Activated CD4-positive, alpha-beta memory T cell treated with anti-CD3 and anti-CD28 coated beads for 36 hours (primary cell): ENCODE measurements at regions of chr4 and their contacts with region 1.

Region 1: DNA sequence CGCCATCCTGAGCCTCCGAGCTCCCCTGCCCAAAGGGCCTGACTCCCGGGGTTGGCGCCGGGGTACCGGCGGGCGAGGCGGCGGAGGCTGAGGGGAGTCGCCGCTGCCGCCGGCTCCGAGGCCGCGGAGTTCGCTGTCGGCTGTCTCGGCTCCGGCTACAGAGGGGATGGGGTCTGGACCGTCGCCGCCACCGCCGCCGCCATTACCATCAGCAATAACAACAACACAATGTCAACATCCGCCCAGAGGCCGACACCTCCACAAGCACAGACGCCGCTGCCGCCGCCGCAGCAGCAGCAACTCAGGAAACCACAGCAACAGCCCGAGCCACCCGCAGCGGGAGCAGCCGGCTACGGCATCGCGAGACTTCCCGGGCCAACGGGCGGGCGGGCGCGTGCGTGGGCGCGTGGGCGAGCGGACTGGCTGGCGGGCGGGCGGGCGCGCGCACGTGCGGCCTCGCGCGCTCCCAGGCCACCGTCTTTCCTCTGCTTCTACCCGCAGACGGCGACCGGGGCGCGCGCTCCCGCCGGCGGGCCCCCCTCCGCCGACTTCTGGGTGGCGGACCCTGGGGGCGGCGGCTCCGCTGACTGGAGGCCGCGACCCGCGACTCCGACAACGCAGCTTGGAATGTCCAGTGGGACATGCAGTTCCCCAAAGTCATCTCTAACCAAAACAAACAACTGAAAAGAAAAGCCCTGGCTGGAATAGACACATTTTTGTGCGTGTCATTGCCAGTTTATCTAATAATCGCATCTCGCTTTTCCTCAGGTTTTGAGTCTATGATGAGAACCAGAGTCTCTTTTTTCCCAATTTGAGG is at the start of gene CHIC2:
- DNase-seq: peak; percentile 97
- H3K4me3 Mint-ChIP-seq: peak within 1 kb of the TSS; percentile 92
- H3K27ac Mint-ChIP-seq: peak within 1 kb of the TSS; percentile 95
- H3K4me1 Mint-ChIP-seq: peaks cover 38% of the 10 kb centered on the region
- H3K27me3 Mint-ChIP-seq: no peaks in the 10 kb centered on the region
- total RNA-seq, gene CHIC2: 11.2 to 11.8 TPM

Region 2: GRCh38 chr4:52643785-52644244 is 1420.7 kb before region 1 on chr4:
- CTCF ChIA-PET with region 1: no interaction called
- POLR2A ChIA-PET with region 1: no interaction called
- intact Hi-C with region 1: loop called (anchors 5 kb)
- DNase-seq: no peak
- H3K4me3 Mint-ChIP-seq: no peak overlapping the region
- H3K27ac Mint-ChIP-seq: no peak overlapping the region
- H3K4me1 Mint-ChIP-seq: peaks cover 57% of the 10 kb centered on the region
- H3K27me3 Mint-ChIP-seq: no peaks in the 10 kb centered on the region

Region 3: DNA sequence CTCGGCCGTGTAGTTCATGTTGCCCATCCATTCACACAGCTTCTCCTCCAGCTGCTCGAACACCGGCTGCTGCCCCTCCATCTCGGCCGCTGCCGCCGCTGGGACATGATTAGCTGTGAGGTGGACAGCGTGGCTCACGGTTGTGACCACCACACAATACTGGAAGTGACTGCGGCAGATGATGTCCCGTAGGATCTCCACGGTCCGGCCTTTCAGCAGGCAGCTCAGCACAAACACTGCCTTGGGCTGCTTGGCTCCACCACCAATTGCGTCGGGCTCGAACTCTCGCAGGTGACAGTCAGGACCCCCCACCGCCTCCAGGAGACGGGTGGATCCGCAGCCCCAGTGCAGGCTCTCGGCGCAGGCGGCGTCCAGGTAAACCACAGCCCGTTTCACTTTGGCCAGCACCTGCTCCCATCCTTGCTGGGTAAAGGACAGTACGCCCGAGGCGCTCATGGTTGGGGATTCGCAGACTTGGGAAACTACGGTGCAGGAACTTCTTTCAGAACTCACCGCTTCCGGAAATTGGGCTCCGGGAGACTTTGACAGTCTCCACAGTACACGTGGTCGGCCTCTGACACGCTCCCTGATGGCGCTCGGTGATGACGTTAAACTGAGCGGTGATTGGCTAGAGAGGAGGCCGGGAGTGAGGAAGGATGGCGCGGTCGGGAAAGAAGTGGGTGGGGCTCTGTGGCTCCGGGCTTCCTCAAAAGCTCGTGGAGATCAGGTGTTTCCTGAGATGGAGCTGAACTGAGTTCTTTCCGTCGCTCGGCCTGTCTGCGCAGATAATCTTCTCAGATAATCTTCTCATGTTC is 698.8 kb before region 1 on chr4 and contains the start of gene SCFD2:
- CTCF ChIA-PET with region 1: no interaction called
- POLR2A ChIA-PET with region 1: no interaction called
- intact Hi-C with region 1: loop called (anchors 5 kb)
- DNase-seq: peak; percentile 99
- H3K4me3 Mint-ChIP-seq: peak within 1 kb of the TSS; percentile 96
- H3K27ac Mint-ChIP-seq: peak within 1 kb of the TSS; percentile 94
- H3K4me1 Mint-ChIP-seq: peaks cover 39% of the 10 kb centered on the region
- H3K27me3 Mint-ChIP-seq: peaks cover 5% of the 10 kb centered on the region
- total RNA-seq, gene SCFD2: 18.8 to 19.9 TPM

Region 4: GRCh38 chr4:53432528-53433424 is 631.7 kb before region 1 on chr4:
- CTCF ChIA-PET with region 1: no interaction called
- POLR2A ChIA-PET with region 1: no interaction called
- intact Hi-C with region 1: loop called (anchors 10 kb)
- DNase-seq: no peak
- H3K4me3 Mint-ChIP-seq: no peak overlapping the region
- H3K27ac Mint-ChIP-seq: no peak overlapping the region
- H3K4me1 Mint-ChIP-seq: peaks cover 23% of the 10 kb centered on the region
- H3K27me3 Mint-ChIP-seq: no peaks in the 10 kb centered on the region

Region 5: GRCh38 chr4:54041100-54041499 is 23.4 kb before region 1 on chr4:
- CTCF ChIA-PET with region 1: no interaction called
- POLR2A ChIA-PET with region 1: no interaction called
- intact Hi-C with region 1: loop called (anchors 2 kb)
- DNase-seq: no peak
- H3K4me3 Mint-ChIP-seq: no peak overlapping the region
- H3K27ac Mint-ChIP-seq: no peak overlapping the region
- H3K4me1 Mint-ChIP-seq: peaks cover 38% of the 10 kb centered on the region
- H3K27me3 Mint-ChIP-seq: no peaks in the 10 kb centered on the region

Region 6: GRCh38 chr4:54091637-54092404 is 27.3 kb after region 1 on chr4:
- CTCF ChIA-PET with region 1: interaction called, 4 read pairs
- POLR2A ChIA-PET with region 1: interaction called, 6 read pairs
- intact Hi-C with region 1: loop called (anchors 2 kb)
- DNase-seq: peak; percentile 80
- H3K4me3 Mint-ChIP-seq: peak overlapping the region; percentile 76
- H3K27ac Mint-ChIP-seq: no peak overlapping the region
- H3K4me1 Mint-ChIP-seq: peaks cover 25% of the 10 kb centered on the region
- H3K27me3 Mint-ChIP-seq: peaks cover 54% of the 10 kb centered on the region